Tibial artery (tissue), 4 donors: ENCODE measurements at regions of chr5 and their contacts with region 1.

Region 1: GRCh38 chr5:143106174-143106573 is 297.3 kb downstream of the NR3C1 start:
- DNase-seq: no peak
- H3K4me3 ChIP-seq: no peak overlapping the region
- H3K27ac ChIP-seq: no peak overlapping the region
- H3K4me1 ChIP-seq: peaks cover 0 to 40% (median 13%) of the 10 kb centered on the region in 4 donors
- H3K27me3 ChIP-seq: no peaks in the 10 kb centered on the region
- CTCF ChIP-seq: peak in 1 of 2 experiments; percentile 15

Region 2: GRCh38 chr5:143063175-143063970 is 42.8 kb before region 1 on chr5:
- intact Hi-C with region 1: loop called (anchors 2 kb)
- DNase-seq: peak; percentile 83 to 86
- H3K4me3 ChIP-seq: no peak overlapping the region
- H3K27ac ChIP-seq: peak overlapping the region; percentile 26 to 52
- H3K4me1 ChIP-seq: peaks cover 0 to 65% (median 33%) of the 10 kb centered on the region in 4 donors
- H3K27me3 ChIP-seq: no peaks in the 10 kb centered on the region
- CTCF ChIP-seq: no peak

Region 3: GRCh38 chr5:143142596-143143435 is 36.6 kb after region 1 on chr5:
- intact Hi-C with region 1: no loop called
- DNase-seq: peak; percentile 79 to 85
- H3K4me3 ChIP-seq: no peak overlapping the region
- H3K27ac ChIP-seq: peak overlapping the region; percentile 75 to 81
- H3K4me1 ChIP-seq: peaks cover 0 to 80% (median 53%) of the 10 kb centered on the region in 4 donors
- H3K27me3 ChIP-seq: no peaks in the 10 kb centered on the region
- CTCF ChIP-seq: no peak

Region 4: DNA sequence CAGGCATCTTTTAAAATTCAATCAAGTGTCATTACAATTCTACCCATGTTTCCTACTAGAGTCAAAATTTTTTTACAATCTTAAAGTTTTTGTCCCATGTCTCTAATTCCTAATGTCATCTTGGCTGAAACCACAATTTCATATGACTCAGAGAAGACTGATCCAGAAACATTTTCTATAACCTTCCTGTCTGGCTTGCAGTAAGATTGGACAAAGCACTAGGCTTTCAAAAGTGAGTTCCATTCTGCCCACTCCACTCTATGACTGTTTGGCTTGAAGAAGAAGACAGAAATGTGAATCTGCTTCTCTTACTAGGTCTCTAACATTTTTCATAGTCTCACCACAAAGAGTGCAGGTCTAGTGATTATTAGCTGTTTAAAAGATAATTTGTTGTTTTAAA is 208.5 kb after region 1 on chr5:
- intact Hi-C with region 1: no loop called
- DNase-seq: no peak
- H3K4me3 ChIP-seq: no peak overlapping the region
- H3K27ac ChIP-seq: no peak overlapping the region
- H3K4me1 ChIP-seq: peaks cover 0 to 95% (median 38%) of the 10 kb centered on the region in 4 donors
- H3K27me3 ChIP-seq: no peaks in the 10 kb centered on the region
- CTCF ChIP-seq: no peak

Region 5: DNA sequence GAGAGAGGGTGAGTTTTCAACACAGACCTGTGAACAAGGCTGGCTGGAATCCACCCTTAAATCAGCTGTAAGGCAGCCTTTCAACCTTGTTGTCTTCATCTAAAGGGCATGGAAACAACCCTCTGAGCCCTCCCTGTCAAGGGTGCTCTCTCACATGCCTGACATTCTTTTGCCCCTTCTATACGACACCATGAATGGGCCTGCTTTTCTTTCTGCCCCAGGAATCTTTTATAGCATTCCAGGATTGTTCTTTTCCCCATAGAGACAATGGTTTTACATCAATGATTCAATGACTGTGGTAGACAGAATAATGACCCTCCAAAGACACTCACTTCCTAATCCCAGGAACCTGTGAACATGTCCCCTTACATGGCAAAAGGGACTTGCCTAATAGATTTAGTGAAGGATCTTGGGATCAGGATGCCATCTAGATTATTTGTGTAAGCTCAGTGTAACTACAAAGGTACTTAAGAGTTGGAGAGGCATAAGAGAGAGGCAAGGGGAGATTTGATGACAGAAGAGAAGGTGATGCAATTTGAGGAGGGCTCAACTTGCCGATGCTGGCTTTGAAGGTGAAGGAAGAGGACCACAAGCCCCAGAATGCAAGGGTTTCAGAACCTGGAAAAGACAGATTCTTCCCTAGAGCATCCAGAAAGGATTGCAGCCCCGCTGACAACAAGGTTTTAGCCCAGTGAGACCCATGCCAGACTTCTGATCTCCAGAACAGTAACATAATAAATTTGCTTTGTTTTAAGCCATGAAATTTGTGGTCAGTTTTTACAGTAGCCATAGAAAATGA is 676.6 kb after region 1 on chr5:
- intact Hi-C with region 1: no loop called
- DNase-seq: no peak
- H3K4me3 ChIP-seq: no peak overlapping the region
- H3K27ac ChIP-seq: no peak overlapping the region
- H3K4me1 ChIP-seq: no peaks in the 10 kb centered on the region
- H3K27me3 ChIP-seq: no peaks in the 10 kb centered on the region
- CTCF ChIP-seq: no peak